Gastrocnemius medialis (tissue), 4 donors: ENCODE measurements at regions of chr4 and their contacts with region 1.

Region 1: DNA sequence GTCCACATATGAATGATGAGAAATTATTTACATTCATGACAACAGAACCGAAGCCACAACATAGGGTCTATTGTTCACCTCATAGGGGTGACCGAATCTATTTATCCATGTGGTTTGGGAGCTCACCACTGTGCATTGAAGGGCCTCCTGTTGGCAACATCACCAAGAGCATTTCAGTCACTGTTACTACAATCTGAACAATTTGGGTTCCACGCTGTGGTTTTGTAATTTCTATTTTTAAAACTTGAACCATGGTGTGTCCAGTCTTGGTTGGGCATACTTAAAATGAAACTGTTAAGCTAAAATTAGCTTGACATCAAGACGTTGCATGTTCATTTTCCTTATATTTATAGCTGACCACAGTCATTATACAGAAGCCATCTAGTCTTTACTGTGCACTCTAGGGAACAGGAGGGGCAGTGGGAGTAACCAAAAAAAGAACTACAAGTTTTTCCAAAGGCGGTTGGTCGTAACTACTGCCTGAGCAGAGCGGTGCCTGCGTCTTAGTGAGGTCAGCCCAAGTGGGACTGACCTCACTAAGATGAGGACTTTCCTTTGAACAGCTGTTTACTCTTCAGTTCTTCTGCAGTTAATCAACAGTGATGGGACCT is 192.1 kb downstream of the SPRY1 start:
- DNase-seq: peak; percentile 13 to 41
- ATAC-seq: peak; percentile 81 to 86
- H3K4me3 ChIP-seq: peak overlapping the region; percentile 3 to 14 (median 9)
- H3K27ac ChIP-seq: peak overlapping the region; percentile 84 to 91 (median 87)
- H3K4me1 ChIP-seq: peaks cover 14 to 21% of the 10 kb centered on the region in 2 donors
- H3K27me3 ChIP-seq: no peaks in the 10 kb centered on the region
- CTCF ChIP-seq: no peak
- POLR2A ChIP-seq: peak in 1 of 2 donors; percentile 50

Region 2: DNA sequence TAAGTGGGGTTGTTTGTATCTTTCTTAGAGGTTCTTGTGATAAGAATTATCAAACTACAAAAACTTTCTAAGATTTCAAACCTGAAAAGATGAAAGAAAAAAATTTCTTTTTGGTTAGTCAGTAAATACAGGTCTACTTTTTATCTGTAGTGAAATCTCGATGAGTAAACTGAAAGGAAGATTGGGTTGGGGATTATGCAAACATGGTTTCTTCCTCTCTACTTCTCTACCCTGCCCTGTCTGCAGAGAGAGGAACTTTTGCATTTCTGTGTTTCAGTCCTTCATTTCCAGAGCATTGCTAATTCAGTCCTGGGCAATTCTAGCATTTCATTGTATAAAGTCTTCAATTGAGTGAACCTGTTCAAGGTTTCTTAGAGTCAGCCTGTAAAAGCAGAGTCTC is 1080.7 kb before region 1 on chr4:
- in situ Hi-C with region 1: no loop called
- intact Hi-C with region 1: no loop called
- DNase-seq: no peak
- ATAC-seq: no peak
- H3K4me3 ChIP-seq: no peak overlapping the region
- H3K27ac ChIP-seq: no peak overlapping the region
- H3K4me1 ChIP-seq: no peaks in the 10 kb centered on the region
- H3K27me3 ChIP-seq: no peaks in the 10 kb centered on the region
- CTCF ChIP-seq: no peak
- POLR2A ChIP-seq: no peak

Region 3: DNA sequence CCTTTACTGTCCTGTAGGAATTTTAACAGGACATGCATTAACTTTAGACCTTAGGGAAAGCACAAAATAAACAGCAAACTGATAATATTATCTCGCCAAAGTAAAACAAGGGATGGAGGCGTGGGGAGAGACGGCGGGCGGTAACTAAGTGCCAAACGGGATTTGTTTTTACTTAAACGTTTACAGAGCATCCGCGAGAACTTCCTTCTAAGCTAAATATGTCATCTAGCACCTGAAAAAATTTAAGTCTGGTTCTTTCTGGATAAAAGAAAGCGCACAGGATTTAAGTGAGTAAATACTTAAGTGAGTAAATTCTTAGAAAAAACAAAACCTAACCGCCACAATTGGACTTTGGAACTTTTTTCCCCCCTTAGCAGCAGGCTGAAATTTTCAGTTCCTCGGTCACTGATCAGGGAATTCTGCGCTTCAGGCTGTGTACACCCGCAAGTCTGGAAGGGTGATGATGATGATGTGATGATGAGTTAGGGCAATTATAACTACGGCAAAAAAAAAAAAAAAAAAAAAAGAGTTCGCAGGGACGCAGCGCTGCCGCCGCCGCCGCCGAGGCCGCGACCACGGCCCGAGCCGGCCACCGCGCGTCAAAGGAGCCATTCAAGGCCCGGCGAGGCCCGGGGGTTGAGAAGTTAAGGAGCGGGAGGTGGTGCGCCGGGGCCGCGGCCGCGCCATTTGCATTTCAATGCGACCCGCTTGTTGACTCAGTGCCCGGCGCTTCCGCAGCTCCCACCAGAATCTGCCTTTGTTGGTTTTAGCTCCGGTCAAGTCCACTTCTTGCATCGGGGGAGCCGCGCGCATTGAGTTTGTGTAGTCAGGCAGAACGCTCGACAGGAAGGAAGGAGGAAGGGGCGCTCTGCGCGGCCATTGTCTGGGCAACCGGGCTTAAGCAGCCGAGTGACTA is 83.4 kb before region 1 on chr4:
- in situ Hi-C with region 1: no loop called
- intact Hi-C with region 1: loop called (anchors 5 kb)
- DNase-seq: peak in 1 of 2 donors; percentile 19
- ATAC-seq: peak; percentile 57 to 67
- H3K4me3 ChIP-seq: peak overlapping the region; percentile 54 to 71 (median 59)
- H3K27ac ChIP-seq: peak overlapping the region; percentile 3 to 63 (median 49)
- H3K4me1 ChIP-seq: peaks cover 7 to 11% of the 10 kb centered on the region in 2 donors
- H3K27me3 ChIP-seq: no peaks in the 10 kb centered on the region
- CTCF ChIP-seq: no peak
- POLR2A ChIP-seq: no peak

Region 4: DNA sequence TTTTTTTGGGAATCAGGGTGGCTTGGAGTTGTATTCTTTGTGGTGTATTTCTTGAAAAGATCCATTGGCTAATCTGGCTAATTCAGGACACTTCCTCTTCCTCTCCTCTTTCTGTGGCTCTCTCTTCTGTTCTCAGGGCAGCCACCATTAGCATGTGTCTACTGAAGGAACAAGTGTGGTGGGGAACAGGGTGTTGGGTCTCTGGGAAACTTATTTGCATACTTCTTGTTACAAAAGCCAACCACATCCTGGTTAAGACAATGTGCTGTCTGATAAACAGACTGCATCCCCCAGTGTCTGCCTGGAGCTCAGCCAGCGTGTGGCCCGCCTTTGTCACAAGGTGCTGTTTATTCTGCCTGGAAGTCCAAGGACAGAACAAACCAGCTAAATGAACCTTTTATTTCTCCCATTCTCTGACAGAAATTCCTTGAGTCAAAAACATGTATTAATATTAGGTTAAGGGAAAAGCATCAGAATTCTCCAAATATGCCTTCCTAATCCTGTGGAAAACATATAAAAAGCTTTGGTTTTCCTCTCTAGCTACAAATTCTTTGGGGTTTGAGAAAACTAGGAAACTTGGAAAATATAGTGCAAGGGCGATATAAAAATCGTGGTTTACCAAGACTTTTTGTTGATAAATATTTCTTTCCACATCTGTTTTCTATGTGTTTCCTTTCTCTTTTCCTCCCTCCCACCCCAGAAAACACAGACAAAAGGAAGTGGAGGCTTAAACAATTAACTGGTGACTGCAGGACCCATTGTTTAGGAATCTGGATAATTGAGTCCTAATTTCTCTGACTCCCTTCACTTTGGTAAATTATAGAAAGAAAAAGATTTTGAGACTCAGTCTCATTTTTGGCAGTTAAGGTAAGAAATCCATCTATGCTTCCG is 11.4 kb after region 1 on chr4:
- in situ Hi-C with region 1: no loop called
- intact Hi-C with region 1: loop called (anchors 1 kb)
- DNase-seq: peak; percentile 28 to 37
- ATAC-seq: peak; percentile 65 to 75
- H3K4me3 ChIP-seq: no peak overlapping the region
- H3K27ac ChIP-seq: peak overlapping the region; percentile 59 to 69 (median 63)
- H3K4me1 ChIP-seq: peaks cover 16 to 17% of the 10 kb centered on the region in 2 donors
- H3K27me3 ChIP-seq: no peaks in the 10 kb centered on the region
- CTCF ChIP-seq: no peak
- POLR2A ChIP-seq: no peak

Region 5: GRCh38 chr4:123649645-123650391 is 61.1 kb after region 1 on chr4:
- in situ Hi-C with region 1: no loop called
- intact Hi-C with region 1: loop called (anchors 1 kb)
- DNase-seq: peak; percentile 29 to 49
- ATAC-seq: peak; percentile 85 to 96
- H3K4me3 ChIP-seq: peak overlapping the region; percentile 19 to 35 (median 30)
- H3K27ac ChIP-seq: peak overlapping the region; percentile 77 to 81 (median 78)
- H3K4me1 ChIP-seq: peaks cover 32 to 41% of the 10 kb centered on the region in 2 donors
- H3K27me3 ChIP-seq: no peaks in the 10 kb centered on the region
- CTCF ChIP-seq: no peak
- POLR2A ChIP-seq: peak in 1 of 2 donors; percentile 23